ENCODE measurements at regions of chr4 and their contacts with region 1.

Region 1: GRCh38 chr4:185395956-185396723 is 416 bp upstream of the LRP2BP start:
- DNase-seq: peak; percentile 99
- H3K4me3 ChIP-seq: peak overlapping the region; percentile 70 to 86 (median 81)
- H3K27ac ChIP-seq: peak overlapping the region; percentile 99
- H3K4me1 ChIP-seq: peaks cover 7% of the 10 kb centered on the region
- H3K27me3 ChIP-seq: no peaks in the 10 kb centered on the region
- CTCF ChIP-seq: no peak

Region 2: GRCh38 chr4:185203486-185204237 is 192.5 kb before region 1 on chr4 and contains the start of gene CFAP97:
- CTCF ChIA-PET with region 1: no interaction called
- dilution Hi-C with region 1: no loop called
- in situ Hi-C with region 1: loop called in 1 of 2 experiments (anchors 10 kb)
- intact Hi-C with region 1: loop called (anchors 2 kb)
- DNase-seq: peak; percentile 77
- H3K4me3 ChIP-seq: peak within 1 kb of the TSS; percentile 68 to 92 (median 79)
- H3K27ac ChIP-seq: peak within 1 kb of the TSS; percentile 85
- H3K4me1 ChIP-seq: peaks cover 13% of the 10 kb centered on the region
- H3K27me3 ChIP-seq: no peaks in the 10 kb centered on the region
- CTCF ChIP-seq: no peak
- total RNA-seq, gene CFAP97: 39.7 to 45.2 TPM

Region 3: GRCh38 chr4:185209031-185209851 is 186.9 kb before region 1 on chr4 and contains the start of gene SNX25:
- CTCF ChIA-PET with region 1: no interaction called
- dilution Hi-C with region 1: no loop called
- in situ Hi-C with region 1: loop called (anchors 10 kb)
- intact Hi-C with region 1: loop called (anchors 1 kb)
- DNase-seq: peak; percentile 79
- H3K4me3 ChIP-seq: peak within 1 kb of the TSS; percentile 35 to 78 (median 73)
- H3K27ac ChIP-seq: peak within 1 kb of the TSS; percentile 66
- H3K4me1 ChIP-seq: peaks cover 11% of the 10 kb centered on the region
- H3K27me3 ChIP-seq: no peaks in the 10 kb centered on the region
- CTCF ChIP-seq: no peak
- total RNA-seq, gene SNX25: 15.3 to 24.0 TPM

Region 4: GRCh38 chr4:185304944-185305690 is 91.0 kb before region 1 on chr4:
- CTCF ChIA-PET with region 1: no interaction called
- dilution Hi-C with region 1: loop called (anchors 5 kb)
- in situ Hi-C with region 1: loop called in 1 of 2 experiments (anchors 10 kb)
- intact Hi-C with region 1: loop called (anchors 1 kb)
- DNase-seq: peak; percentile 26
- H3K4me3 ChIP-seq: no peak overlapping the region
- H3K27ac ChIP-seq: peak overlapping the region; percentile 100
- H3K4me1 ChIP-seq: peaks cover 32% of the 10 kb centered on the region
- H3K27me3 ChIP-seq: no peaks in the 10 kb centered on the region
- CTCF ChIP-seq: peak; percentile 25 to 34

Region 5: DNA sequence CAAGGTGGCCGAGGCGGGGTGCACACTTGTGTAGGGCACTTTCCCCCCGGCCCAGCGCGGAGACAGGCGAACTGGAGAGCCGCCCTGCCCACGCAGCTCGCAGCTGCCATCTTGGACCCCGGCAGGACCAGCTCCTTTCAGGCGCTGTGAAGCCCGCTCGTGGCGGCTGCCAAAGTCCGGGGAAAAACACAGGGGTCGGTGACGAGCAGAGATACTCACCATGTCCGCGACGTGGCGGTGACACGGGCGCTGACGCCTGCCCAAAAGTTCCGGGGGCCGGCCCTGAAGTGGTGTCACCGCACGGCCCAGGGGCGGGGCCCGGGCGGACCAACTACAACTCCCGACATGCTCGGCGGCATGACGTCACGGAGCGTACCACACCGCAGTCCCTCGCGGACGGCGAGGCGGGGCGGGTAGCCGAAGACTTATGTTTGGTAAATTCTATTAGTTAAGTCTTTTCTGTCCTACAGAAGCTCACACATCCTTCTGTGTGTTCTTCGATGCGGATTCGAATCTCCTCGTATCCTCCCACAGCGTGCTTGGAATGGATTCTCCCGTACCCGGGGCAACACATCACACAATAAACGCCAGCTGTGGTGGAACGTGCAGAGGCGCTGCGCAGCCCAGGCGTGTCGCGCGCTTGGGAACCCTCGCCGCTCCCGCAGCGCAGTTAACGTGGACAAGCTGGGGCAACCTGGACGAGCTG is 29.7 kb after region 1 on chr4 and contains the start of gene UFSP2:
- CTCF ChIA-PET with region 1: no interaction called
- dilution Hi-C with region 1: no loop called
- in situ Hi-C with region 1: no loop called
- intact Hi-C with region 1: loop called (anchors 1 kb)
- DNase-seq: peak; percentile 89
- H3K4me3 ChIP-seq: peak within 1 kb of the TSS; percentile 63 to 88 (median 77)
- H3K27ac ChIP-seq: peak within 1 kb of the TSS; percentile 100
- H3K4me1 ChIP-seq: no peaks in the 10 kb centered on the region
- H3K27me3 ChIP-seq: no peaks in the 10 kb centered on the region
- CTCF ChIP-seq: no peak
- total RNA-seq, gene UFSP2: 24.7 to 30.0 TPM

Region 6: DNA sequence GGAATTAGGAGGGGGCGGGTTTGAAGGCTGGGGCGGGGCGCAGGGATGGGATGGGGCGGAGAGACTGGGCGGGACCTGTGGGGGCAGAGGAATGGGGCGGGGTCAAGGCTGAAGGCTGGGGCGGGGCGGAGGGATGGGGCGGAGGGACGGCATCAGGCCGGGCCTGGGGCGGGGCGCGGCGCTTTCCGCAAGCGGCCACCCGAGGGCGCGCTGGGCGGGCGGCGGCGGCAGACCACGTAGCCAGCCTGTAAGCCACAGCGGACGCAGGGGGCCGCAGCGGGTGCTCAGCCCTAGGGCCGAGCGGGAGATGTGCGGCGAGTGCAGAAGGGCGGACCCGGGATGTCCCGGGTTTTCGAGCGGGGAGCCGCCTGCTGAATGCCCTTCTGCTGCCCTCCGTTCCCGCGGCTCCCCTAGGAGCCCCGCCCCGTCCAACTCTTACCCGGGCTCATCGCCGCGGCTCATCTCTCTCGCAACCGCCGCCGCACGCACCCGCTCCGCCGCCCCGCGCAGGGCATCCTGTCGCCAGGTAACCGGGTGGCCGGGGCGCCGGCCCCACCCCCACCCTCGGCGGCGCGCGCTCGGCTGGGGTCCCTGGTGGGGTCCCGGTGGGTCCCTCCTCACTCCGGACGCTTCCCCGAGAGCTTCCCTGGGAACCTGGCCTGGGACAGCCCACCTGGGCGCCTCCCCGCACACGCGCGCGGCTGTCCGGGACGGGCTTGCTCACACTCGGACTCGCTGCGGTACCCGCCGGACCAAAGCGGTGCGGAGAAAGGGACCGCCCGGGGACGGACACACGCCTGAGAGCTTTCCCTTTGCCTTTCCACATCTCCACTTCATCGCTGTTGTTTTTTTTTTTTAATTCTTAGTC is 75.3 kb after region 1 on chr4 and contains the start of gene CCDC110:
- CTCF ChIA-PET with region 1: no interaction called
- dilution Hi-C with region 1: no loop called
- in situ Hi-C with region 1: no loop called
- intact Hi-C with region 1: loop called (anchors 2 kb)
- DNase-seq: peak; percentile 81
- H3K4me3 ChIP-seq: peak within 1 kb of the TSS; percentile 71 to 86 (median 82)
- H3K27ac ChIP-seq: no peak within 1 kb of the TSS
- H3K4me1 ChIP-seq: peaks cover 10% of the 10 kb centered on the region
- H3K27me3 ChIP-seq: peaks cover 5% of the 10 kb centered on the region
- CTCF ChIP-seq: peak in 1 of 2 donors; percentile 46
- total RNA-seq, gene CCDC110: 0.17 to 0.59 TPM

Region 7: GRCh38 chr4:185597532-185598188 is 201.5 kb after region 1 on chr4:
- CTCF ChIA-PET with region 1: no interaction called
- dilution Hi-C with region 1: no loop called
- in situ Hi-C with region 1: no loop called
- intact Hi-C with region 1: loop called (anchors 1 kb)
- DNase-seq: peak; percentile 46
- H3K4me3 ChIP-seq: no peak overlapping the region
- H3K27ac ChIP-seq: no peak overlapping the region
- H3K4me1 ChIP-seq: no peaks in the 10 kb centered on the region
- H3K27me3 ChIP-seq: no peaks in the 10 kb centered on the region
- CTCF ChIP-seq: peak; percentile 99